ENCODE measurements at regions of chrX and their contacts with region 1.

Region 1: GRCh38 chrX:1205680-1206611 is 6.5 kb downstream of the CRLF2 start:
- DNase-seq: peak; percentile 14 to 77 (median 69)
- ATAC-seq: peak; percentile 70
- H3K4me3 ChIP-seq: peak overlapping the region; percentile 56
- H3K4me3 Mint-ChIP-seq: peak overlapping the region; percentile 76 to 87 (median 83)
- H3K27ac ChIP-seq: no peak overlapping the region
- H3K27ac Mint-ChIP-seq: peak overlapping the region in 7 of 9 donors; percentile 22 to 68 (median 36)
- H3K4me1 ChIP-seq: peaks cover 6 to 11% of the 10 kb centered on the region in 2 donors
- H3K4me1 Mint-ChIP-seq: peaks cover 15 to 42% (median 32%) of the 10 kb centered on the region in 7 donors
- H3K27me3 ChIP-seq: no peaks in the 10 kb centered on the region
- H3K27me3 Mint-ChIP-seq: no peaks in the 10 kb centered on the region

Region 2: GRCh38 chrX:1231850-1232465 is 26.0 kb after region 1 on chrX:
- CTCF ChIA-PET with region 1: no interaction called
- POLR2A ChIA-PET with region 1: no interaction called
- intact Hi-C with region 1: loop called in 1 of 2 experiments (anchors 1 kb)
- DNase-seq: peak in 7 of 9 donors; percentile 24 to 60 (median 54)
- ATAC-seq: peak; percentile 67
- H3K4me3 ChIP-seq: peak overlapping the region; percentile 23
- H3K4me3 Mint-ChIP-seq: peak overlapping the region in 8 of 10 donors; percentile 55 to 73 (median 62)
- H3K27ac ChIP-seq: no peak overlapping the region
- H3K27ac Mint-ChIP-seq: peak overlapping the region in 5 of 9 donors; percentile 6 to 65 (median 41)
- H3K4me1 ChIP-seq: peaks cover 0 to 14% of the 10 kb centered on the region in 2 donors
- H3K4me1 Mint-ChIP-seq: peaks cover 6 to 41% (median 22%) of the 10 kb centered on the region in 7 donors
- H3K27me3 ChIP-seq: no peaks in the 10 kb centered on the region
- H3K27me3 Mint-ChIP-seq: peaks cover 0 to 5% (median 0%) of the 10 kb centered on the region in 5 donors